Astrocyte of the spinal cord (primary cell): ENCODE measurements at regions of chr5 and their contacts with region 1.

Region 1: DNA sequence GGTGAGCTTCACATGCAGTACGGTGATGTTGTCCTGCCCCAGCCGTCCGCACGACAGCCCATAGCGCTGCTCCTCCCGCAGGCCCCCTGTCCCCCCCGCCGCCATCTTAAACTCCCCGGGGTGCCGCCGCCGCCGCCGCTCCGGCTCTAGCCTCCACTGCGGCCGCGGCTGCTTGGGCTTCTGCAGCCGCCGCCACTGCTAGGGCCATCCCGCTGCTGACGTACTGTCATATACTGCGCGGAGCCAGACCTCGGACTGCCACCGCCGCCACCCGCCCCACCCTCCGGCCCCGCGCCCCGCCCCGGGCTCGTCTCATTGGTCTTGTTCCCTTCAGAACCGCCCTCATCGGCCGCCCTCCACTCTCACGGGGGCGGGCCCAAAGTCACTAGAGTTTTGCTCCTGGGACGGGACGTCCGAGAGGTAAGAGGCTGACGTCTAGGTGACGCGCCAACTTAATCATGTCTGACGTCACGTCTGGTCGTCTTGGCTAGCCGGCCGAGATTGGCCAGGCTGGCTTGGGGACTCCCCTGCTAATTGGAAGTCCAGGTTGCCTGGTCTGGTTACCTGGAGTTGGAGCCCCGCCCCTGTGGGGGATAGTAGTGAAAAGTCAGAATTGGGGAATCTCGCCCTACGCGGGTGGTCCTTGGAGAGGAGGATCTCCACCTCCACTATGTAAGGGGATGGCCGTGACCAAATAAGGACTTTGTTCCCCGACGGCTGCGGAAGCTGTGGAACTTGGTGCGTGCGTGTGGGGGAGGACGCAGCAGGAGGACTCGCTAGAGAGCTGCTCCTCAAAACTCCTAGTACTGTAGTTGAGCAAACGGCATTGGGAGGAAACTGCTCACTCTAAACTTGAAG is at the start of gene ELL2:
- DNase-seq: peak; percentile 100
- H3K4me3 ChIP-seq: peak within 1 kb of the TSS; percentile 92
- CTCF ChIP-seq: no peak

Region 2: GRCh38 chr5:95781101-95781583 is 180.7 kb before region 1 on chr5:
- in situ Hi-C with region 1: no loop called
- DNase-seq: peak; percentile 86
- H3K4me3 ChIP-seq: no peak overlapping the region
- CTCF ChIP-seq: peak; percentile 87

Region 3: DNA sequence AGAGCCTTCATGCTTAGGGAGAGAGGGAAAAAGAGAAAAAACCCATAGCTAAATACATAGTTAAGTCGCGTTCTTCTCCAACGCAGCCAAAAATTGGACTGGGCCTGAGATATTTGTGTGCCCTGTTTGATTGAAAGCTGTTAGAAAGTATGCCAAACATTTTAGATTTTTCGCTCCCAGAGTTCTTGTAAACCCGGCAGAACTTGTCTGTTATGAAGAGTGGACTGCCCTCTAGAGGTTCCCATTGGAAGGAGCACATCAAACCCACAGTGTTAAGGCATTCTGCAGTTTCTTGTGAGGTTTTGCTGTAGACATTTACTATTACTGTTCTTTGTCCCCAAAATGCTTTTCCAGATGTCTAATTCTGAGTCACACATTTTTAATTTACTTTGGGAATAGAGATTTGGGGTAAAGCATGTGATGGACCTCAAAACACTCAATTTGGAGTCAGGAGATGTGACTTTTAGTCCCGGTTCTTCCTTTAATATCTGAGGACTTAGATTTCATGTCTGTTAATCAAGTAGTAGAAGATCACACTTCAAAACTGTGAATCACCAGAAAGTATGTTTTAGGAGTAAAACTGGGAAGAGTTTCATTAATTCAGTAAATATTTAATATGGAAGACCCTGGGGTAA is 374.6 kb after region 1 on chr5:
- in situ Hi-C with region 1: loop called (anchors 25 kb)
- DNase-seq: peak; percentile 93
- H3K4me3 ChIP-seq: no peak overlapping the region
- CTCF ChIP-seq: peak; percentile 89